ENCODE measurements at regions of chr2 and their contacts with region 1.

Region 1: GRCh38 chr2:188524519-188525113 is 232.9 kb downstream of the GULP1 start:
- DNase-seq: peak; percentile 16 to 18
- H3K4me3 ChIP-seq: no peak overlapping the region
- H3K27ac ChIP-seq: no peak overlapping the region
- H3K4me1 ChIP-seq: no peaks in the 10 kb centered on the region
- H3K27me3 ChIP-seq: no peaks in the 10 kb centered on the region
- CTCF ChIP-seq: peak; percentile 56 to 84 (median 74)
- POLR2A ChIP-seq: no peak

Region 2: DNA sequence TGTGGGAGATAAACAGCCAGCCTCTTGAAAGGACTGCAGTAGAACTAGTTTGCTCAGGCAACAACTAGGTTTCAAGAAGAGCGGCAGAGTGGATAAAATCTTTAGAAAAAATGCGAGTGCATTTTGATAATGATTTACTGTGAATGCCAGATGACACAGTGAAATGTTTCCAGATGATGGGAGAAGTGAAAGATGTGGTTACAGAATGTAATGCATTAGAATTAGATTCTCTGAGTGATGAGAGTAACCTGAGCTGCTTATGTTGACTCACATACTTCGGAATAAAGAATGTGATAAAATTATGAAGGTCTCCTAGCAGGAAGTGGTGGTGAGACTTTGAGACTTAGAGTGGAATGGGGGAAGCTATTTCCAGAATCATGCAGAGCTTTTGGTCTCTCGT is 48.7 kb before region 1 on chr2:
- intact Hi-C with region 1: no loop called
- DNase-seq: no peak
- H3K4me3 ChIP-seq: no peak overlapping the region
- H3K27ac ChIP-seq: no peak overlapping the region
- H3K4me1 ChIP-seq: peaks cover 23 to 29% of the 10 kb centered on the region in 2 donors
- H3K27me3 ChIP-seq: no peaks in the 10 kb centered on the region
- CTCF ChIP-seq: no peak
- POLR2A ChIP-seq: no peak

Region 3: GRCh38 chr2:188713961-188714360 is 189.3 kb after region 1 on chr2:
- intact Hi-C with region 1: no loop called
- DNase-seq: no peak
- H3K4me3 ChIP-seq: no peak overlapping the region
- H3K27ac ChIP-seq: no peak overlapping the region
- H3K4me1 ChIP-seq: no peaks in the 10 kb centered on the region
- H3K27me3 ChIP-seq: no peaks in the 10 kb centered on the region
- CTCF ChIP-seq: no peak
- POLR2A ChIP-seq: no peak

Region 4: DNA sequence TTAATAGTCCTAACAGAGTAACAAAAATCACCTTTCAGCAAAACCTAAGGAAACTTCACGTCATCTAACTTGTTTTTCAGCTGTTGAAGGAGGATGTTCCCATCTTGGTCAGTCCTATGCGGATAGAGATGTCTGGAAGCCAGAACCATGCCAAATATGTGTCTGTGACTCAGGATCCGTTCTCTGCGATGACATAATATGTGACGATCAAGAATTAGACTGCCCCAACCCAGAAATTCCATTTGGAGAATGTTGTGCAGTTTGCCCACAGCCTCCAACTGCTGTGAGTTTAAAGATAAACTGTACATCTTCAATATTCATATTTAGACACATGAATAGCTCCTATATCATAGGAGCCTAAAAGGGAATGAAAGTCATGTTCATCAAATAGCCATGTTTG is 460.1 kb after region 1 on chr2:
- intact Hi-C with region 1: loop called (anchors 5 kb)
- DNase-seq: no peak
- H3K4me3 ChIP-seq: no peak overlapping the region
- H3K27ac ChIP-seq: peak overlapping the region in 2 of 3 donors; percentile 4 to 51
- H3K4me1 ChIP-seq: no peaks in the 10 kb centered on the region
- H3K27me3 ChIP-seq: no peaks in the 10 kb centered on the region
- CTCF ChIP-seq: no peak
- POLR2A ChIP-seq: no peak

Measured in thyroid gland (tissue), 4 donors.